ENCODE measurements at regions of chr2 and their contacts with region 1.

Region 1: GRCh38 chr2:30208452-30208851 is 22.9 kb upstream of the LBH start:
- DNase-seq: peak; percentile 62
- ATAC-seq: peak; percentile 74
- H3K4me3 Mint-ChIP-seq: no peak overlapping the region
- H3K27ac Mint-ChIP-seq: no peak overlapping the region
- H3K4me1 Mint-ChIP-seq: peaks cover 18% of the 10 kb centered on the region
- H3K27me3 Mint-ChIP-seq: no peaks in the 10 kb centered on the region

Region 2: DNA sequence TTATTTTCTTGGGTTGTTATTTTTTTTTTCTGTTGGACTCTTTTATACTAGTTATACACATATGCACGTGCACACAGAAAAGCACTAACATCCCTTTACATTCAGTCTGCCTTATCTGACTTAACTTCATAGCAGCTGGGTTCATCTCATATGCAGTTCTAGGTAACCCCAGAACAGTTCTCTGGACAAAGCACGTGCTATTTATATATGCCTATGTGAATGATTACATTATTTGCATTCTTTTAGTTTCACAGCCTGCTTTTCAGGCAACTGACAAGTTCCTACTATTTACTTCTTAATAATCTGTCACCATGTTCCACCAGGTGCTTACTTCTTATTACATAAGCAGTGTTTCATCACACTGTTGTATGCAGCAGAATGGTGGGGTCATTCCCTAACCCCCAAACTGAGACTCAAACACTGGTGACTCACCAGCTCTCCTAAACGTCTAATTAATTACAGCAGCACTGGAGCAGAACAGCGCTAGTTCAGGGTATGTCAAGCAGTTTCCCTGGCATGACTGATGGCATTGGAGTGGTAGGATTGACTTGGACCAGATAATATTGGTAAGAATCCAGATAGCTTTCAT is 720.4 kb before region 1 on chr2:
- CTCF ChIA-PET with region 1: no interaction called
- POLR2A ChIA-PET with region 1: no interaction called
- intact Hi-C with region 1: no loop called
- DNase-seq: no peak
- ATAC-seq: no peak
- H3K4me3 Mint-ChIP-seq: no peak overlapping the region
- H3K27ac Mint-ChIP-seq: no peak overlapping the region
- H3K4me1 Mint-ChIP-seq: no peaks in the 10 kb centered on the region
- H3K27me3 Mint-ChIP-seq: peaks cover 2% of the 10 kb centered on the region

Region 3: GRCh38 chr2:30106543-30106942 is 101.9 kb before region 1 on chr2:
- CTCF ChIA-PET with region 1: no interaction called
- POLR2A ChIA-PET with region 1: no interaction called
- intact Hi-C with region 1: no loop called
- DNase-seq: no peak
- ATAC-seq: no peak
- H3K4me3 Mint-ChIP-seq: no peak overlapping the region
- H3K27ac Mint-ChIP-seq: no peak overlapping the region
- H3K4me1 Mint-ChIP-seq: no peaks in the 10 kb centered on the region
- H3K27me3 Mint-ChIP-seq: peaks cover 3% of the 10 kb centered on the region

Region 4: DNA sequence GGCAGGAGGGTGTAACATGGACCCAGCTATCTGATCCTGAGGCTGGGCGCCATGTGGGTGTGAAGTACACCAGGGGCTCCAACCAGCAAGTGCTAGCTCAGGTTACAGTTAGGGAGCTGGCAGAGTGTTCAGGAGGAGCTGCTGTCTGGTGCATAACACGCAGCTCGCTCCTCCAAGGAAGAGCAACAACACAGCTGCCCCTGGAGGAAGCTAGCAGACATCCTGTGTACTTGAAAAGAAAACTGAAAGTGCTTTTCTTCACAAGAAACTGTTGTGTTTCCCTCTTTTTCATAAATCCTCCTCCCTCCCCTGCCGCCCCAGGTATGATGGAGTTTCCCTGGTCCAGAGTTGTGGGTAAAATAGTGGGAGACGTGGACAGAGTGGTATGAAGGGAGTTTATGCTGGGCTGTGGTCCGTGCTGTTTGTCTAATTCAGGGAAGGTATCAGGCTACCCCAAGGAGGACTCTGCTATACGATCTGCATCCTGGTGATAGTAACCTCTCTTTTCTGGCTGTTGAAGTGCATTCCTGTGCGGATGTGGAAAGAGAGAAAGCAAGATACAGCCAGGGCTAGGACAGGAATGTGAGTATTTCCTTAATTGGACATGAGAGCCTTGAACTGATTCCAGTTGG is 16.8 kb after region 1 on chr2:
- CTCF ChIA-PET with region 1: interaction called, 70 read pairs
- POLR2A ChIA-PET with region 1: interaction called, 4 read pairs
- intact Hi-C with region 1: loop called in 1 of 2 experiments (anchors 1 kb)
- DNase-seq: peak; percentile 58
- ATAC-seq: peak; percentile 64
- H3K4me3 Mint-ChIP-seq: peak overlapping the region; percentile 77
- H3K27ac Mint-ChIP-seq: peak overlapping the region; percentile 93
- H3K4me1 Mint-ChIP-seq: peaks cover 74% of the 10 kb centered on the region
- H3K27me3 Mint-ChIP-seq: peaks cover 9% of the 10 kb centered on the region

Region 5: DNA sequence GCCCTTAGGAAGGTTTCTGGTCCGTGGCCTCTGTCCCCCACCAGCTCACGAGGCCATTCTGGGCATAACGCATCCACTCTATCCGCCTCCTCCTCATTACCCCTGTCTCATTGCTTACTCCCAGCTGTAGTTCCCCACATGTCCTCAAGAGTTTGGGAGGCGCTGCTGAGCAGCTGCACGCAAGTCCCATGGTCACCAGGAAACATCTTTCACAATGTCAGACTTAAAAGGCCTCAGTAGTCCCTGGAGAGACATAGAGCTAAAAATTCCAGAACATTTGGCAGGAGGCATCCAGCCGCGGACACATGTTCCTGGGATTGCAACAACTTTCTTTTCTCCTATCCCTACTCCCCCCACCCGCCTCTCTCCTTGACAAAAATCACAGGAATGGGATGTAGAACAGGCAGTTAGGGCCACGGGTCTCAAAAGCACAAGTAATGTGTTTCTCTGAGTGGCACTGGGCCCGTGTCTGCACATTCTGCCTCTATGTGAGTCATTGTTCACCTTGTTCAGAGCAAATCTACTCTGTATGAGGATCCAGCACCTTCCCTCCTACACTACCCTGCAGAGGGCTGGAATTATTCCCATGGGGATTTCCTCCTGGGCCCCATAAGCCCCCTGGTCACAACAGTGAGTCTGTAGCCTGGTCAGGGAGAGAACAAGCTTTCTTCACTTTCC is 31.0 kb after region 1 on chr2:
- CTCF ChIA-PET with region 1: interaction called, 20 read pairs
- POLR2A ChIA-PET with region 1: no interaction called
- intact Hi-C with region 1: no loop called
- DNase-seq: peak; percentile 85
- ATAC-seq: peak; percentile 34
- H3K4me3 Mint-ChIP-seq: peak overlapping the region; percentile 76
- H3K27ac Mint-ChIP-seq: peak overlapping the region; percentile 93
- H3K4me1 Mint-ChIP-seq: peaks cover 93% of the 10 kb centered on the region
- H3K27me3 Mint-ChIP-seq: no peaks in the 10 kb centered on the region

Region 6: GRCh38 chr2:30287857-30288513 is 79.5 kb after region 1 on chr2:
- CTCF ChIA-PET with region 1: interaction called, 15 read pairs
- POLR2A ChIA-PET with region 1: no interaction called
- intact Hi-C with region 1: no loop called
- DNase-seq: no peak
- ATAC-seq: peak; percentile 60
- H3K4me3 Mint-ChIP-seq: no peak overlapping the region
- H3K27ac Mint-ChIP-seq: peak overlapping the region; percentile 49
- H3K4me1 Mint-ChIP-seq: peaks cover 24% of the 10 kb centered on the region
- H3K27me3 Mint-ChIP-seq: no peaks in the 10 kb centered on the region

Region 7: GRCh38 chr2:30475542-30475941 is 267.1 kb after region 1 on chr2:
- CTCF ChIA-PET with region 1: interaction called, 9 read pairs
- POLR2A ChIA-PET with region 1: interaction called, 3 read pairs
- intact Hi-C with region 1: loop called in 1 of 2 experiments (anchors 1 kb)
- DNase-seq: no peak
- ATAC-seq: no peak
- H3K4me3 Mint-ChIP-seq: no peak overlapping the region
- H3K27ac Mint-ChIP-seq: no peak overlapping the region
- H3K4me1 Mint-ChIP-seq: peaks cover 37% of the 10 kb centered on the region
- H3K27me3 Mint-ChIP-seq: no peaks in the 10 kb centered on the region

Region 8: DNA sequence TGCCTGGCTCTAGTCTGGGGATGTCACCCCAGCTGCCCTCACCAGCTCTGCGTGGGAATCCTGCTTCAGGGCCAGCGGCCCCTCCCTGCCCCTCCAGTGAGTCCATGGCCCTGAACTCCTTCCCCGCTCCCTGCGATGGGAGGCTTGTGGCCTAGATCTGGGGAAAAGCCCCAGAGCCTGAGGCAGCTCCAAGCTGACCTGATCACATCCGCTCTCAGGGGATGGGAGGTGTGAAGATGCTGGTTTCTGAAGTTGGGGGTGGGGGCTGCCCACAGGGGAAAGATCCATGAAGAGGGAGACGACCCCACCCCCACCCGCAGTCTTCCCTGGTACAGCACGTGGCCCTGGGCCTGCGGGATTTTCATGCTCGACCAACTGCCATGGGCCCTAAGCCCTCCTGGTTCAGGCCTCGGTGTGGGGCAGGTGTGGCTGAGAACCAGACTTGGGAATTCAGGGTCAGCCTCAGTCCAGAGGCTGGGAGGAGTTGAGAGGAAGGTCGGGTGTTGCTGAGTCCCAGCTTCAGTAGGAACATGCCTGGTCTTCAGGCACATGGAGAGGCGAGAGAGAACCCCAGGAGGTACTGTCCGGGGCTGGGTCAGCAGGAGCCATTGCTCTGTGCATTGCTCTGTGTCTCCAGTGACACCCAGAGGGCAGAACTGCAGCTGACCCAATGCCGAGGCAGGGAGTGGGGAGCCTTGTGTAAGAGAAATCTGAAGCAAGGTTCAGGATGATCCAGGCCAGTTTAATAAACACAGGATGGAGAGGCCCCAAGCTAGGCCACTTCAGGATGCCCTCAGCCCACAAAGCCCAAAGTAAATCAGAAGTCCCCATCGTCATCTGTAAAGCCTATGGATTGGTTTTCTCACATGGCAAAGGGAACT is 483.7 kb after region 1 on chr2:
- CTCF ChIA-PET with region 1: interaction called, 12 read pairs
- POLR2A ChIA-PET with region 1: no interaction called
- intact Hi-C with region 1: no loop called
- DNase-seq: peak; percentile 30
- ATAC-seq: no peak
- H3K4me3 Mint-ChIP-seq: no peak overlapping the region
- H3K27ac Mint-ChIP-seq: no peak overlapping the region
- H3K4me1 Mint-ChIP-seq: no peaks in the 10 kb centered on the region
- H3K27me3 Mint-ChIP-seq: no peaks in the 10 kb centered on the region

Region 9: GRCh38 chr2:31302940-31303563 is 1094.6 kb after region 1 on chr2:
- CTCF ChIA-PET with region 1: no interaction called
- POLR2A ChIA-PET with region 1: no interaction called
- intact Hi-C with region 1: no loop called
- DNase-seq: no peak
- ATAC-seq: no peak
- H3K4me3 Mint-ChIP-seq: no peak overlapping the region
- H3K27ac Mint-ChIP-seq: no peak overlapping the region
- H3K4me1 Mint-ChIP-seq: no peaks in the 10 kb centered on the region
- H3K27me3 Mint-ChIP-seq: peaks cover 2% of the 10 kb centered on the region

Measured in activated CD4-positive, alpha-beta T cell treated with anti-CD3 and anti-CD28 coated beads for 36 hours (primary cell).